ENCODE measurements at regions of chr7 and their contacts with region 1.

Region 1: DNA sequence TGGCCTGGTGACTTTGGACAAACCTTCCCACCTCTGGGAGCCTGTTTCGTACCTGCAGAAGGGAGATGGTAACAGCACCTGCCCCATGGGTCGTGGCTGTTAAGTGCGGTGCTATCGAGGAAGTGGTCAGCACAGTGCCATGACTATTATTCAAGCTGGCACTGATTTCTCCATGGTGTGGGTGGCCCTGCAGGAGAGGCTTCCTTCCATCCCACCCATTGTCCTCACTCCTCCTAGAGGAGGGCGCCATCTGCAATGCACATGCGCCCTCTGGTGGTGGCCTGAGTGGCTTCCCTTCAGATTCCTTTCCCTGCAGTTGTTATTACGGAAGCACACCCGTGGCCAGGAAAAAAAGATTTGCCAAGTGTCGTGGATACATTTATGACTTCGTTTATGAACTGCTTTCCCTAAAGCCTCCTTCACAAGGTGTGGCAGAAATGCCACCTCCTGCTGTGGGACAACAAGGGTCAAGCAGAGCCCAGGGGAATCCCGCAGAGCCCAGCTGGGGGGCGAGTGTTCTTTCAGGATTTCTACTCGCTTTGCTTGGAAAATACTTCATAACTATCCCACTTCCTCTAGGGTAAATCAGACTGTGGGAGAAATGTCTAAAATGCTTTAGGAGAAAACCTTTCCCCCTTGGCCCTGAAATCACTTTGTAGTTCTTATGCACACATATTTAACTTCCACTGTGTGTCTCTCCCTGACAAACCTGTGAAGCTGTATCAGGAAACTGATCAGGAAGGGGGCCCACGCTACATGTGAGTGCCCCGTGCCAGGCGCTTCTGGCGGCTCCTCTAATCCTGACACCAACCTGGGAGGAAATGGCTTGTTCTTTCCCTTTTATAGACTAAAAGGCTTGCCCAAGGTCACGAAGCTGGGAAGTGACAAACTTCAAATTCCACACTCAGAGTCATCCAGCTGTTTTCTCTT is 98.0 kb upstream of the ANLN start:
- DNase-seq: peak; percentile 74
- H3K4me3 Mint-ChIP-seq: peak overlapping the region; percentile 31
- H3K27ac Mint-ChIP-seq: no peak overlapping the region
- H3K4me1 Mint-ChIP-seq: peaks cover 48% of the 10 kb centered on the region
- H3K27me3 Mint-ChIP-seq: no peaks in the 10 kb centered on the region

Region 2: GRCh38 chr7:35596061-35596460 is 695.6 kb before region 1 on chr7:
- CTCF ChIA-PET with region 1: no interaction called
- POLR2A ChIA-PET with region 1: no interaction called
- DNase-seq: no peak
- H3K4me3 Mint-ChIP-seq: no peak overlapping the region
- H3K27ac Mint-ChIP-seq: no peak overlapping the region
- H3K4me1 Mint-ChIP-seq: peaks cover 6% of the 10 kb centered on the region
- H3K27me3 Mint-ChIP-seq: no peaks in the 10 kb centered on the region

Region 3: GRCh38 chr7:35985126-35985754 is 306.4 kb before region 1 on chr7:
- CTCF ChIA-PET with region 1: interaction called, 82 read pairs
- POLR2A ChIA-PET with region 1: no interaction called
- DNase-seq: peak; percentile 77
- H3K4me3 Mint-ChIP-seq: no peak overlapping the region
- H3K27ac Mint-ChIP-seq: no peak overlapping the region
- H3K4me1 Mint-ChIP-seq: no peaks in the 10 kb centered on the region
- H3K27me3 Mint-ChIP-seq: no peaks in the 10 kb centered on the region

Region 4: DNA sequence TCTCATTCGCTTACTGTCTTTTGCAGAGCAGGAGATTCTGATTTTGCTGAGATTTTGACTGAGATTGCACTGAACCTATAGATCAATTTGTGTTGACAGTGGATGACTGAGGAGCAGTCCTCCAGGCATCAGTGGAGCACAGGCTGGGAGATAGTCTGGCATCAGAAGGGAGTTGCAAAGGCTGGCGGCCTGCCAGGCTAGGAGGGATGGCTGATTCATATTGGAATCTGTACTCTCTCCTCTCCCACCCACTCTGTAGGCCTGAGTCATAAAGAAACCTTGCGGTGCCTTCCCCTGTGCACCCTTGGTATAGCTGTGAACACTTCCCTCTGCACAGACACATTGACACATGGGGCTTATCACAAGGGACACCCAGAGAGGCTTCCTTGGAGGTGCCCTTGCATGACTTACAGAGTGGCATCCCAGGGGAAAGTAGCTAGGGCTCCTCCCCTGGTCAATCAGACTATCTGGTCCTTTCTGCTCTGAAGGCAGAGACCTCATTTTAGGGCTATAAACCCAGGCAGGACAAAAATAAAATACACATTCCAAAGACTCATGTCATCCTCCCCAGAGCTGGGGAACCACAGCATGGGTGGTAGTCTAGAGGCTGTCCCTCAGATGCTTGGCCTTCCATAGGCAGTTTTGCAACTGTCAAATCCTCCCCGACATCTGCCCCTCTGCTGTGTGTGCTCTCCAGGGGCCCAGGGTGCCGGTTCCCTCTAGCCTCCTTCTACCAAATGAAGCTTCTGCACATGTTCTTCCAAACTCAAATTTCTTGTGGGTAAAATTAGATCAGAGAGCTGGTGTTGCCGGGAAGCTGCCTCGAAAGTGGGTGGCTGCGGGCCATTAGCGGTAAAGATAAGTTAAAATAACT is 176.0 kb before region 1 on chr7:
- CTCF ChIA-PET with region 1: interaction called, 5 read pairs
- POLR2A ChIA-PET with region 1: interaction called, 15 read pairs
- DNase-seq: peak; percentile 80
- H3K4me3 Mint-ChIP-seq: no peak overlapping the region
- H3K27ac Mint-ChIP-seq: peak overlapping the region; percentile 52
- H3K4me1 Mint-ChIP-seq: peaks cover 32% of the 10 kb centered on the region
- H3K27me3 Mint-ChIP-seq: peaks cover 30% of the 10 kb centered on the region

Region 5: DNA sequence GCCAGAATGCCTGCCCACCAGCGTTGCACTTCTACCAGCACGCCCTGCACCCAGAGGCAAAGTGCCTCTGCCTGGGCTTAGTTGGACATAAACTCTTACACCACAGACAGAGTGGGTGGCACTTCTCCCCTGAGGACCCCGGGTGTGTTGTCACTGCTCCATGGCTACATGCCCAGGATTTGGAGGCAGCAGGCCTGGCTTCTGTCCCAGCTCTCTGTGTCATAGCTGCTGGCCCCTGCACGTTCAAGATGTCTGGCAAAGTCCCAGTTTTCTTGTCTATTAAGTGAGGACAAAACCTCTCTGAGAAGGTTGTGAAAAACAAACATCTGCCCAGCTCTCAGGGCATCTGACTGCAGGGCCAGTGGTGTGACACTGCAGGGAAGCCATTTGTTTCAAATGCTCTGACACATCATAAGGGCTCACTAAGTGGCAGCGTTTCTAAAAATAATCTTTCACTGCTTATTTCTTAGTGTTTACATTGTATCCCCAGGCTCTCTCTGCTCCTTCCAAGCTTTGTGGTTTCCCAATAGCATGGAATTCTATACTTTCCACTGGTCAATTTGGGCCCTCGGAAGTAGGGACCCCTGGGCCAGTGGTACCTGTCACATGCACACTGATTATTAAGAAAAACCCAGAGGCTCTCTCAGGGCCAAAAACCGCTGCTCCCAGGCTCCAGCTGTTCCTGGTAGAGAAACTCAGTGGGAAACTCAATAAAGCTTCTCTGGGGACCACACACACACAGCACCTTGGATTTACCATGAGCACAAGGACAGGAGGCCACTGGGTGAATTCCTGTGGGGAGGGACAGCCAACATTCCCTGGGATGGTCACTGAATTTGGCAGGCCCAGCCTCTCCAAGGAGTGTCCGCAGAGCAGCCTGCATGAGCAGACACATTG is 11.8 kb after region 1 on chr7:
- CTCF ChIA-PET with region 1: interaction called, 10 read pairs
- POLR2A ChIA-PET with region 1: interaction called, 4 read pairs
- DNase-seq: no peak
- H3K4me3 Mint-ChIP-seq: no peak overlapping the region
- H3K27ac Mint-ChIP-seq: no peak overlapping the region
- H3K4me1 Mint-ChIP-seq: no peaks in the 10 kb centered on the region
- H3K27me3 Mint-ChIP-seq: no peaks in the 10 kb centered on the region

Region 6: GRCh38 chr7:36318116-36318515 is 26.5 kb after region 1 on chr7:
- CTCF ChIA-PET with region 1: interaction called, 21 read pairs
- POLR2A ChIA-PET with region 1: no interaction called
- DNase-seq: no peak
- H3K4me3 Mint-ChIP-seq: no peak overlapping the region
- H3K27ac Mint-ChIP-seq: no peak overlapping the region
- H3K4me1 Mint-ChIP-seq: peaks cover 3% of the 10 kb centered on the region
- H3K27me3 Mint-ChIP-seq: peaks cover 9% of the 10 kb centered on the region

Region 7: GRCh38 chr7:36389371-36390198 is 97.9 kb after region 1 on chr7 and contains the start of gene ANLN:
- CTCF ChIA-PET with region 1: no interaction called
- POLR2A ChIA-PET with region 1: interaction called, 13 read pairs
- DNase-seq: peak; percentile 89
- H3K4me3 Mint-ChIP-seq: peak within 1 kb of the TSS; percentile 91
- H3K27ac Mint-ChIP-seq: peak within 1 kb of the TSS; percentile 78
- H3K4me1 Mint-ChIP-seq: peaks cover 40% of the 10 kb centered on the region
- H3K27me3 Mint-ChIP-seq: peaks cover 4% of the 10 kb centered on the region
- total RNA-seq, gene ANLN: 65.1 to 69.0 TPM

Region 8: DNA sequence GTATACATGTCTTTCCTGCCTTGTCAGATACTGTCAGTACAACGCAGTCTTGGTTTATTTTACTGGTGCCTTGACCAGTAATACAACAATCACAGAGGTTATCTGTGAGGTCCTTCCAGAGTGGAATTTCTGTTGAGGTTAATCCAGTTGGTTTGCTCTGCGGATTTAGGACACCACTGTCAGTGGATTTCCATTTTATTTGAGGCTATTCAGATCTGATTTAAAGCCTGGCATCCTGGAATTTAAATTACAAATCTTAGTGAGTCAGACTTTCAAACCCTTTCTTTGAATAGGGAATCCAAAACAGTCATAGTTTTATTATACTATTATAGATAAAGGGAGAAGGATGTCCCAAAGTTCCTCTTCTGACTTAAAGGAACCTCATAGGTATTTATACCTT is 138.5 kb after region 1 on chr7:
- CTCF ChIA-PET with region 1: no interaction called
- POLR2A ChIA-PET with region 1: no interaction called
- DNase-seq: no peak
- H3K4me3 Mint-ChIP-seq: no peak overlapping the region
- H3K27ac Mint-ChIP-seq: no peak overlapping the region
- H3K4me1 Mint-ChIP-seq: no peaks in the 10 kb centered on the region
- H3K27me3 Mint-ChIP-seq: no peaks in the 10 kb centered on the region

Region 9: DNA sequence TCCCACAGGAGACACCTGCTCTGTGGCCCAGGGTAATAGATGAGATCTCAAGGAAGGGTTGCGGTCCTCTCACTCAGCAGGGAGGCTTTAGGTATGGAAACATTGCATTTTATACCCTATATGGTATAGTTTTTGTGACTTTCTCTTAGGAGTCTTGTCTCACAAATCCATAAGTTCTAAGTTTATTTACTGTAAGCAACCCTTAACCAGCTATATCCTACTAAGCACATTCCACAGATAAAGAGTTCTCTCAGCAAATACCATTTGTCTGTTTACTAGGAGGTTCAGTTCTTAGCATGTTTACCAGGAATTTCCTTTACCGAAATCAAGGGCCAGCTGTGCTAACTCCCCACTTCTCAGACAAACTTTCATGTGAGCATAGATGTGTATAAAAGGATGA is 164.9 kb after region 1 on chr7:
- CTCF ChIA-PET with region 1: no interaction called
- POLR2A ChIA-PET with region 1: no interaction called
- DNase-seq: no peak
- H3K4me3 Mint-ChIP-seq: no peak overlapping the region
- H3K27ac Mint-ChIP-seq: no peak overlapping the region
- H3K4me1 Mint-ChIP-seq: no peaks in the 10 kb centered on the region
- H3K27me3 Mint-ChIP-seq: no peaks in the 10 kb centered on the region

Region 10: GRCh38 chr7:36490404-36490830 is 198.8 kb after region 1 on chr7:
- CTCF ChIA-PET with region 1: no interaction called
- POLR2A ChIA-PET with region 1: no interaction called
- DNase-seq: no peak
- H3K4me3 Mint-ChIP-seq: no peak overlapping the region
- H3K27ac Mint-ChIP-seq: no peak overlapping the region
- H3K4me1 Mint-ChIP-seq: peaks cover 3% of the 10 kb centered on the region
- H3K27me3 Mint-ChIP-seq: peaks cover 8% of the 10 kb centered on the region

Measured in activated CD4-positive, alpha-beta memory T cell treated with anti-CD3 and anti-CD28 coated beads, Interleukin-2, amount 10 ng/mL, durations not matched to agents 7 days and 5 days (primary cell).